Dorsolateral prefrontal cortex (tissue), 120 donors: ENCODE measurements at regions of chr14 and their contacts with region 1.

Region 1: DNA sequence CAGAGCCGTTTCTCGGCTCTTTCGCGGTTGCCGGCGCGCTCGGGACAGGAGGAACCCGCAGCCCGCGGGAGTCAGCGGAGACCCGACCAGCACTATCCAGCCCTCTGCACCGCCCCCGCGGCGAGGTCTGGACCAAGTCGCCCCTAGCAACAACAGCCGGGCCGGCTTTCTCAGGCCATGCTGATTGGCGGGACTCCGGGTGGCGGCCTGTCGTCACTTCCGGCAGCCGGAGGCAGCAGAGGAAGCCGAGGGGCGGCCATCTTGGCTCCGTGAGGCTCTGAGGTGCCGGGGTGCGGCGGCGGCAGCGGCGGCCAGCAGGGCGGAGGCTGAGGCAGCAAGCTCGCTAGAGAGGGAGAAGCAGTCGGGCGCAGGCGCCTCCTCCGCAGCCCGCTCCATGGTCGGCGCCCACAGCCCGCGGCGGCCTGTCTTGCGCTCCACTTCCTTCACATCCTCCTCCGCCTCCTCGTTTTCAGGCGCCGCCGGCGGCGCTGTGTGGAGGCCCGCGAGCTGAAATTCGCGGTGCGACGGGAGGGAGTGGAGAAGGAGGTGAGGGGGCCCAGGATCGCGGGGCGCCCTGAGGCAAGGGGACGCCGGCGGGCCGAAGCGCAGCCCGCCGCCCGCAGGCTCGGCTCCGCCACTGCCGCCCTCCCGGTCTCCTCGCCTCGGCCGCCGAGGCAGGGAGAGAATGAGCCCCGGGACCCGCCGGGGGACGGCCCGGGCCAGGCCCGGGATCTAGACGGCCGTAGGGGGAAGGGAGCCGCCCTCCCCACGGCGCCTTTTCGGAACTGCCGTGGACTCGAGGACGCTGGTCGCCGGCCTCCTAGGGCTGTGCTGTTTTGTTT is at the start of gene MARK3:
- DNase-seq: peak; percentile 94 to 99 (median 98)
- H3K4me3 ChIP-seq: peak within 1 kb of the TSS; percentile 71 to 99 (median 91)
- H3K27ac ChIP-seq: peak within 1 kb of the TSS; percentile 93 to 100 (median 99)
- H3K27me3 ChIP-seq: no peaks in the 10 kb centered on the region
- CTCF ChIP-seq: peak in 42 of 56 donors; percentile 3 to 56 (median 31)
- total RNA-seq, gene MARK3: 106 to 189 (median 135) TPM

Region 2: DNA sequence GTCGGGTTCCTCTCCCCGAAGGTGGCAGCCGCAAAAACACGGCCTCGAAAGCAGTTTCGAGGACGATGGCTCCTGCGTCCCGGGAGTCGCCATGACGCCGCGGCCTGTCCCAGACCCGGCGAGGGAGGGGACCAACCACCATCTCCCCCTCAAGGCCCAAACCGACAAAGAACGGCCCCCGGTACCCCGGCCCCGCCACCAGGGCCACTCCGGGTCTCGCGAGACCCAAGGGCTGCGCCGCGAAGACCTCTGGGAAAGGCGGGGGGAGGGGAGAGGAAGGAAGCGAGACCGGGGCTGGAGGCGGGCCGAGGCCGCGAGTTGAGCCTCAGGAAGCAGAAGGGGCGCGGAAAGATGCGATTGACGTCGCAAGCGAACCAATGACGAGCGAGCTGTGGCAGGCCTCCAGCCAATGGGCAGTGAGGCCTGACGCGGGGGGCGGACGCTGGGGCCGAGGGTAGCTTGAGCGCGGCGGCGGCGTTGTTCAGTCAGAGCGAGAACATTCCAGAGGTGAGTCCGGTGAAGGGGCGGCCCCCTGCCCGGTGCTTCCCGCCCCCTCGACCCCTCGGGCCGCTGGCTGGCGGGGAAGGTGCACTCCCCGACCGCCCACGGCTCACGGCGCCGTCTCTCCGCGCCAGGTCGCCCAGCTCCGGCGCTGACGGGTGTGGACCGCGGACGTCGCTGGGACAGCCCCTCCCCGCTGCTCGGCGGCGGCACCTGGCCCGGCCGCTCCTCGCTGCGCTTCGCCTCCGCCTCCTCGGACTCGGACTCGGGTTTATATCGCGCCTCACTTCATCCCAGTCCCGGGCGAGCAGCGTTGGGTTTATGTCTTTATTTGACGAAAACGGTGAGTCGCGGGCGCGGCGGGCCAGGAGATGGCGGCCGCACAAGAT is 51.4 kb before region 1 on chr14 and contains the start of gene EIF5:
- intact Hi-C with region 1: loop called (anchors 1 kb)
- DNase-seq: peak; percentile 98 to 100 (median 99)
- H3K4me3 ChIP-seq: peak within 1 kb of the TSS; percentile 59 to 99 (median 94)
- H3K27ac ChIP-seq: peak within 1 kb of the TSS; percentile 95 to 100 (median 100)
- H3K27me3 ChIP-seq: no peaks in the 10 kb centered on the region
- CTCF ChIP-seq: peak in 48 of 56 donors; percentile 11 to 60 (median 39)
- total RNA-seq, gene EIF5: 176 to 436 (median 299) TPM